ENCODE measurements at regions of chr3 and their contacts with region 1.

Region 1: DNA sequence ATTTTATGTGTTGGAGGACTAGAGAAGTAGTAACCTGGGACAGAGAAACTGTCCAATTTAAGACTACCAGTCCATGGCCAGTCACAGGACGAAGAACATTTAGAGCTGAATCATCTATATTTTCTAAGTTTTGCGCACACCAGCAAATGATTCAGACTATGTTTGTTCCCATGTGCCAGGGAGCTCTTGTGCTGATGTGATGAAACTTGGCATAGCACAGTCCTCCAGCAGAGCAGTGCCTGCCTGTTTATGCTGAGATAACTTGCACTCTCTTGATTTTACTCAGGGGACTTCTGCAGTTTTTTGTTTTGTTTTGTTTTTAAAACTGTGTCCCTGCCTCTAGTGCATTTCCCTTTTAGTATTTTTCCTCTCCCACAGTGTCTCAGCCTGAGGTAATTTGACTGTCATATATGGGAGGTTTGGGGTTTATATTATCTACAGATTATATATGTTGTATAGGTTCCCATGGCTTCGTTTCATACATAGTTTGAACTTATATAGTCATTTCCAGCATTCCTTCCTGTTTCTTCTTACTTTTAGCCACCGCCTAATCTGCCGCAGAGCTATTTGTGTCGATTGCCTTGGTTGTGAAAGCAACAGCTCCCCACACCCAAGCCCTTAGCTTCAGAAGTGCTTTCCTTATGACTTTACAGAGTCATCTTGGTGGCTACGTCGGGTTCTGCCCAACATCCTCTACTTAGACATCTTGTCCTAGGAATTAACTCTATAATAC is 45.5 kb downstream of the PPM1L start:
- DNase-seq: peak; percentile 78
- H3K4me3 Mint-ChIP-seq: peak overlapping the region; percentile 18
- H3K27ac Mint-ChIP-seq: peak overlapping the region; percentile 42
- H3K4me1 Mint-ChIP-seq: peaks cover 17% of the 10 kb centered on the region
- H3K27me3 Mint-ChIP-seq: peaks cover 8% of the 10 kb centered on the region

Region 2: GRCh38 chr3:160169139-160169976 is 632.2 kb before region 1 on chr3:
- CTCF ChIA-PET with region 1: no interaction called
- POLR2A ChIA-PET with region 1: no interaction called
- intact Hi-C with region 1: no loop called
- DNase-seq: no peak
- H3K4me3 Mint-ChIP-seq: no peak overlapping the region
- H3K27ac Mint-ChIP-seq: no peak overlapping the region
- H3K4me1 Mint-ChIP-seq: peaks cover 12% of the 10 kb centered on the region
- H3K27me3 Mint-ChIP-seq: no peaks in the 10 kb centered on the region

Region 3: DNA sequence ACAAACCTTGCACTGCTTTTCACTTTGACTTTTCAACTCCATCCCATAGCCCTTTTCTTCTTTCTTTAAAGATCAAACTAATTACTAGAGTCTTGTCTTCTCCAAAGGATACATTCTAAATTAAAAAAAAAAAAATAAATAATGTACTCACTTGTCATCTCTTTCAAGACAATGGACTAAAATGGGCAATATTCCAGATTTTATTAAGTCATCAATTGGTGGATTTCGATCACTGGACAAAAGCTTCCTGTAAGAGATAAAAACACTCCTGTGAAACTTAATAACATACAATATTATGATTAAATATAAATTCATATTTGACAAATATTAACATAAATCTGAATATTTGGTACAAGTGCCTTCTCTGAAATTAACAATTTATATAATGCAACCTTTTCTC is 270.2 kb before region 1 on chr3:
- CTCF ChIA-PET with region 1: no interaction called
- POLR2A ChIA-PET with region 1: no interaction called
- intact Hi-C with region 1: no loop called
- DNase-seq: no peak
- H3K4me3 Mint-ChIP-seq: no peak overlapping the region
- H3K27ac Mint-ChIP-seq: no peak overlapping the region
- H3K4me1 Mint-ChIP-seq: no peaks in the 10 kb centered on the region
- H3K27me3 Mint-ChIP-seq: no peaks in the 10 kb centered on the region

Region 4: GRCh38 chr3:160720123-160720746 is 81.3 kb before region 1 on chr3:
- CTCF ChIA-PET with region 1: no interaction called
- POLR2A ChIA-PET with region 1: no interaction called
- intact Hi-C with region 1: no loop called
- DNase-seq: no peak
- H3K4me3 Mint-ChIP-seq: no peak overlapping the region
- H3K27ac Mint-ChIP-seq: no peak overlapping the region
- H3K4me1 Mint-ChIP-seq: no peaks in the 10 kb centered on the region
- H3K27me3 Mint-ChIP-seq: peaks cover 6% of the 10 kb centered on the region

Region 5: GRCh38 chr3:160754855-160755747 is 46.5 kb before region 1 on chr3:
- CTCF ChIA-PET with region 1: interaction called, 3 read pairs
- POLR2A ChIA-PET with region 1: interaction called, 12 read pairs
- intact Hi-C with region 1: loop called (anchors 1 kb)
- DNase-seq: peak; percentile 94
- H3K4me3 Mint-ChIP-seq: peak overlapping the region; percentile 95
- H3K27ac Mint-ChIP-seq: peak overlapping the region; percentile 90
- H3K4me1 Mint-ChIP-seq: peaks cover 26% of the 10 kb centered on the region
- H3K27me3 Mint-ChIP-seq: peaks cover 12% of the 10 kb centered on the region

Region 6: GRCh38 chr3:160773722-160774121 is 27.8 kb before region 1 on chr3:
- CTCF ChIA-PET with region 1: no interaction called
- POLR2A ChIA-PET with region 1: interaction called, 5 read pairs
- intact Hi-C with region 1: loop called (anchors 2 kb)
- DNase-seq: no peak
- H3K4me3 Mint-ChIP-seq: no peak overlapping the region
- H3K27ac Mint-ChIP-seq: no peak overlapping the region
- H3K4me1 Mint-ChIP-seq: peaks cover 6% of the 10 kb centered on the region
- H3K27me3 Mint-ChIP-seq: no peaks in the 10 kb centered on the region

Region 7: DNA sequence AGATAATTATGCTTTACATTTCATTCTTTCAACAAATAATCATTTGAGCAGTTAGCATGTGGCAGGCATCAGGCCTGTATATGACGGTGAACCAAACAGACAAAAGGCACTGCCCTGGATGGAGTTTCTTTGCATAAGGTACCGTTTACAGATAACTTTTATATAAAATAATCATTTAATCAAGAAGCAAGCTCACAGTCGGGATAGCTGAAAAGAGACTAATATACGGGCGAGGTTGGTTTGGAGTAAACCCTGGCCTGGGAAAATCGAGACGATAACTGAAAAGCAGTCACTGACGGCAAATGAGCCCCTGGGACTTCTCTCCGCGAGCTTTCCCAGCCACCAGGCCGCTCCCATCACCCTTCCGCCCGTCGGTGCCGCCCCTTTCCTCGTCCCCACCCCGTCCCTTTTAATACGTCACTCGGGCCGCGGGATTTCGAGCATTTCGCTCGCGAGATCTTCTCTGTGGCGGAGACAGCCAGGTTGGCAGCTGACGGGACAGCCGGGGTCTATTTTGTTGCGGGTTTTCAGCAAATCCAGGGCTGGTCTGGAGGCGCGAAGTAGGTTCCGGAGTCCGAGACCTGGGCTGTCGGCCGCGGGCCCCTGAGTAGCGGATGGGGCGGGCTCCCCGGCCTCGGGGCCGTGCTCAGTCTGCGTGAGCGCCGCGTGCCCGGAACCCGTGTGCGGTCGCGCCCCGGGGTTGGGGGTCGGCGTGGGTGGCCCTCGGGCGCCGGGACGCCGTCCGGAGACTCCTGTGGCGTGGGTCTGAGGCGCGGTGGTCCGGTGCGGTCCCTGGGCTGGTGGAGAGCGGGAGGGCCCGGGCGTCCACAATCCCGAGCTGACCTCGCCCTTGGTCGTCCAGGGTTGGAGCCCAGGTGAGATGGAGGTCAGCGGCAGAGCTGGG is 419.6 kb after region 1 on chr3 and contains the start of gene NMD3:
- CTCF ChIA-PET with region 1: no interaction called
- POLR2A ChIA-PET with region 1: no interaction called
- intact Hi-C with region 1: no loop called
- DNase-seq: peak; percentile 96
- H3K4me3 Mint-ChIP-seq: peak within 1 kb of the TSS; percentile 87
- H3K27ac Mint-ChIP-seq: peak within 1 kb of the TSS; percentile 84
- H3K4me1 Mint-ChIP-seq: peaks cover 23% of the 10 kb centered on the region
- H3K27me3 Mint-ChIP-seq: peaks cover 3% of the 10 kb centered on the region
- total RNA-seq, gene NMD3: 65.8 to 70.8 TPM

Region 8: GRCh38 chr3:161305095-161305991 is 503.8 kb after region 1 on chr3:
- CTCF ChIA-PET with region 1: no interaction called
- POLR2A ChIA-PET with region 1: no interaction called
- intact Hi-C with region 1: loop called (anchors 5 kb)
- DNase-seq: no peak
- H3K4me3 Mint-ChIP-seq: no peak overlapping the region
- H3K27ac Mint-ChIP-seq: no peak overlapping the region
- H3K4me1 Mint-ChIP-seq: peaks cover 24% of the 10 kb centered on the region
- H3K27me3 Mint-ChIP-seq: peaks cover 6% of the 10 kb centered on the region